Panc1 (cell line): ENCODE measurements at regions of chr11 and their contacts with region 1.

Region 1: GRCh38 chr11:115324581-115325432 is 179.4 kb downstream of the CADM1 start:
- DNase-seq: peak; percentile 51
- ATAC-seq: peak; percentile 94
- H3K4me3 ChIP-seq: peak overlapping the region; percentile 14 to 48; a peak in 3 of 4 replicates
- H3K27ac ChIP-seq: no peak overlapping the region
- H3K4me1 ChIP-seq: no peaks in the 10 kb centered on the region
- H3K27me3 ChIP-seq: no peaks in the 10 kb centered on the region
- CTCF ChIP-seq: peak; percentile 85

Region 2: DNA sequence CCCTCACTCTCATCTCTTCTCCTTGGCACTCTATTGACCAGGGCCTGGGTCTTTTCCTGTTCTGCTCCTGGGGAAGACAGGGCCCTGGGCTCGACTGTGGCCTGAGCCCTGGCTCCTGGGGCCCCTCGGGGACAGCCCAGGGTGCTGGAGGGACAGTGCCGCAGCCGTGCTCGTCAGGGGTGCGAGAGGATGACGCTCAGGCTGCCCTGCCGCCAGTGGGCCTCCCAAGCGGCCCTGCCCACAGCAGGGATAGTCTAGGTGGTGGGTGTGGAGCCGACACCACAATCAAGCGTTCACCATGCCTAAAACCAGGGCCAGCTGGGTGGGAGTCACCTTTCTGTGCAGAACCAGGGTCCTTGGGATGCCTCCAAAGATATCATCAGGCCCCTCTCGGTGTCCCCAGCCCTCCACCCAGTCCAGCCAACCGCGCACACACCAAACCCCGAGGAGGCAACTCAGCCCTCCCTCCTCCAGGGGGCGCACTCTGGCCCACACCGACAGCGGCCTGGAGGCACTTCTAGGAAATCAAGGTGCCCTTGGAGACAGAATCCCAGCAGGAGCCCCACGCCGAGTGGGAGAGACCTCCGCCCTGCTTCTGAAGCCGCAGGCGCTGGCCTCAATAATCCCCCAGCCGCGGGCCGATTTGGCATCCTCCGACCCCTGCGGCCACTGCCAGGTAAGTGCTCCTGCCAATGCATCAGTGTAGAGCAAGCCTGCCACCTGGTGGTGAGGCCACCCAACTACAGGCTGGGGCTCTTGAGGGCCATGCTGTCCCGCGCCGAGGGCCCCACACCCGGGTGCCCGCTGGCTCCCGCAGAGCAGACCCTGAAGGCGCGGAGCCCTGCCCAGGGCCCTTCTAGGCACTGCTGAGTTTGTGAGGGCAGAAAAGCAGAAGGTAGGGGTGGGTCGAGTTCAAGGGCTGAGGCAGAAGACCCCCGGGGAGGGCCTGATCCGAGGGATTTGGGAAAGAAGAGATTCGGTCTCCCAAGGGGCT is 951.5 kb after region 1 on chr11:
- CTCF ChIA-PET with region 1: no interaction called
- POLR2A ChIA-PET with region 1: no interaction called
- in situ Hi-C with region 1: no loop called
- intact Hi-C with region 1: loop called (anchors 2 kb)
- DNase-seq: peak; percentile 28
- ATAC-seq: peak; percentile 95
- H3K4me3 ChIP-seq: no peak overlapping the region
- H3K27ac ChIP-seq: no peak overlapping the region
- H3K4me1 ChIP-seq: 0 out of 2 replicates have a peak, but pooled peaks cover 2% of the 10 kb centered on the region
- H3K27me3 ChIP-seq: no peaks in the 10 kb centered on the region; the same call in 1 of the 2 replicates
- CTCF ChIP-seq: peak; percentile 98

Region 3: DNA sequence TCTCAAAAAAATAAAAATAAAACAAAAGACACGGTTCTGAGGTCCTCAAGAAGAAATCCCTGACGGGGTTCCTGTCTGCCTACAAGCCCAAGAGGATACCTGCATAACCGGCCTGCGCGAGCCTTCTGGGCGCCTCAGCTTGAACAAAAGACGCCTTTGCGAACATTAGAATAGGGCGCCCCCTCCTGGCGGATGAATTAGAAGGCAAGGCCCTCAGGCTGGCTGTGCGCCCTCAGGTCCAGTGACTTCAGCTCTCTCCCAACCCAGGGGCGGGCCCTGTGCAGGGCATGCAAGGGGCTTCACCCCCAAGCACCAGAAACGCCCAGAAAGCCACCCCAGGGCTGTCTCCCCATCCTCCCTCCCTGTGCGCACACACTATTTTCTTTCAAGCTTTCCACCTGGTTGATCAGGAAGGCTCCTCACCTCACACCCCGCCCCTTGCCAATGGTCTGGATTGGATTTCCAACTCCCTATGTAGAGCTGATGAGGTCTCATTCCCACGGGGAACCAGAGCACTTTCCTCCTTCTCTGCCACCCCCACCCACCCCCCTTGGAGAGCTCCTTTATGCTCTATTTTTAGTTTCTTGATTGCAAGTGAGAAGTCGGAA is 1174.7 kb after region 1 on chr11:
- CTCF ChIA-PET with region 1: no interaction called
- POLR2A ChIA-PET with region 1: no interaction called
- in situ Hi-C with region 1: no loop called
- intact Hi-C with region 1: loop called (anchors 2 kb)
- DNase-seq: no peak
- ATAC-seq: peak; percentile 90
- H3K4me3 ChIP-seq: no peak overlapping the region
- H3K27ac ChIP-seq: no peak overlapping the region
- H3K4me1 ChIP-seq: no peaks in the 10 kb centered on the region
- H3K27me3 ChIP-seq: 0 out of 2 replicates have a peak, but pooled peaks cover 3% of the 10 kb centered on the region
- CTCF ChIP-seq: peak; percentile 92